AG04450 (cell line): ENCODE measurements at regions of chr3 and their contacts with region 1.

Region 1: GRCh38 chr3:125062888-125063618 is 7.3 kb upstream of the HEG1 start:
- DNase-seq: peak; percentile 96
- H3K4me3 ChIP-seq: no peak overlapping the region
- H3K27ac ChIP-seq: peak overlapping the region; percentile 94
- H3K27me3 ChIP-seq: no peaks in the 10 kb centered on the region
- CTCF ChIP-seq: no peak

Region 2: GRCh38 chr3:125083776-125084175 is 20.7 kb after region 1 on chr3:
- CTCF ChIA-PET with region 1: no interaction called
- POLR2A ChIA-PET with region 1: interaction called, 12 read pairs
- DNase-seq: no peak
- H3K4me3 ChIP-seq: no peak overlapping the region
- H3K27ac ChIP-seq: no peak overlapping the region
- H3K27me3 ChIP-seq: no peaks in the 10 kb centered on the region
- CTCF ChIP-seq: no peak

Region 3: DNA sequence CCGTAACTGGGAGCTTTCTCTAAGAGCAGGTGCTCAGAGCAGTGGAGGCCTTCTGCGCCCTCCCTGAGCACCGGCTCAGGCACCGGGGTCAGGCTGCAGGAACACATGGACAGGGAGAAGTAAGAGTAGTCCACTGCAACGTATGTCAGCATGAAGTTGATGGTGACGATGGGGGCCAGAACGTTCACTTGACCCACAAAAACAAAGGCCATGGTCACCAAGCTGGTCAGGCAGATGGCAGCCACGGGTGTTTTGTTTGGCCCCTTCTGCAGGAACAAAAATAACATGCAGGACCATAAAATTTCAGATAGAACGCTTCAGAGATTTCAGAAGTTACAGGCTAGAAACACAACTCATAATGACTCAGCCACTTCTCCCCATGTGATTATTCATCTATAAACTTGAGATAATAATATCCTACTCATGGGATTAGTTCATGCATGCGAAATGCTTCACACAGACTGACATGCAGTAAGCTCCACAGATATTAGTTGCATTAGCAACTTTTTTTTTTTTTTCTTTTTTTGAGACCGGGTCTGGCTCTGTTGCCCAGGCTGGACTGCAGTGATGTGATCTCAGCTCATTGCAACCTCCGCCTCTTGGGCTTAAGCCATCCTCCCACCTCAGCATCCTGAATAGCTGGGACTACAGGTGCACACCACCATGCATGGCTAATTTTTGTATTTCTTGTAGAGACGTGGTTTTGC is 45.0 kb after region 1 on chr3:
- CTCF ChIA-PET with region 1: no interaction called
- POLR2A ChIA-PET with region 1: interaction called, 16 read pairs
- DNase-seq: peak; percentile 77
- H3K4me3 ChIP-seq: no peak overlapping the region
- H3K27ac ChIP-seq: peak overlapping the region; percentile 92
- H3K27me3 ChIP-seq: no peaks in the 10 kb centered on the region
- CTCF ChIP-seq: no peak